Calu3 (cell line): ENCODE measurements at regions of chr2 and their contacts with region 1.

Region 1: GRCh38 chr2:152175458-152176325 is at the start of gene STAM2:
- DNase-seq: peak; percentile 96
- H3K4me3 Mint-ChIP-seq: peak within 1 kb of the TSS; percentile 81
- H3K27ac Mint-ChIP-seq: peak within 1 kb of the TSS; percentile 96
- H3K4me1 Mint-ChIP-seq: peaks cover 19% of the 10 kb centered on the region
- H3K27me3 Mint-ChIP-seq: no peaks in the 10 kb centered on the region
- CTCF ChIP-seq: peak; percentile 93
- total RNA-seq, gene STAM2: 28.7 and 28.8 TPM in 2 replicates

Region 2: GRCh38 chr2:152036611-152037469 is 138.9 kb before region 1 on chr2:
- CTCF ChIA-PET with region 1: interaction called, 4 read pairs
- intact Hi-C with region 1: loop called (anchors 1 kb)
- DNase-seq: peak; percentile 65
- H3K4me3 Mint-ChIP-seq: no peak overlapping the region
- H3K27ac Mint-ChIP-seq: no peak overlapping the region
- H3K4me1 Mint-ChIP-seq: no peaks in the 10 kb centered on the region
- H3K27me3 Mint-ChIP-seq: peaks cover 26% of the 10 kb centered on the region
- CTCF ChIP-seq: peak; percentile 68

Region 3: DNA sequence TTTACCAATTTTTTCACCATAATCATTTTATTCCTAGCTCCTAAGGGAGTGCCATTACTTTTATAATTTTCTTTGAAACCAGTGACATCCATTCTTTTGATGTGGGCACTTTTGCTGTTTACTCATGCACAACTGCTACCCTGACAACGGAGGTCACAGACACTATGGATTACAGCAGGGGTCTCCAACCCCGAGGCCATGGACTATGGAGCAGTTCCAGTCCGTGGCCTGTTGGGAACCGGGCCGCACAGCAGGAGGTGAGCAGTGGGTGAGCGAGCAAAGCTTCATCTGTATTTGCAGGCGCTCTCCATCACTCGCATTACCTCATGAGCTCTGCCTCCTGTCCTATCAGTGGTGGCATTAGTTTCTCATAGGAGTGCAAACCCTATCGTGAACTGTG is 507.0 kb after region 1 on chr2:
- CTCF ChIA-PET with region 1: no interaction called
- intact Hi-C with region 1: no loop called
- DNase-seq: no peak
- H3K4me3 Mint-ChIP-seq: no peak overlapping the region
- H3K27ac Mint-ChIP-seq: no peak overlapping the region
- H3K4me1 Mint-ChIP-seq: peaks cover 8% of the 10 kb centered on the region
- H3K27me3 Mint-ChIP-seq: no peaks in the 10 kb centered on the region
- CTCF ChIP-seq: no peak